ENCODE measurements at regions of chr2 and their contacts with region 1.

Region 1: DNA sequence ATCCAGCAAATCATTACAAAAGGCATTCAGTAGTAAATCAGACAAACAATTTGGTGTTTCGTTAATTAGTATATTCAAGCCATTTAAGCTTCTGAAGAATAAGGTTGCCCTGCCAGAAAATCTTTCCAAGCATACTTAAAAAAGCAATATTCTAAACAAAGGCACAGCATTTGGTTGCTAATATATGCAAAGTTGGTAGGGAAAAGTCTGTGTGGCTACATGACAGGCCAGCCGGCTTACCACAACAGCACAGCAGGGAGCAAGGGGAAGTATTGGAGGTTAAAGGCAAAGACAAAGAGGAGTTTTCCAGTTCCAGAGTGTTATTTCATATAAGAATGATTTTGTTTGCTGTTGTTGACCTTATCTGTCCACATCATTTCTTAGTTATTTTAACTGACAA is 282.3 kb downstream of the MBD5 start:
- DNase-seq: no peak
- ATAC-seq: no peak
- H3K4me3 ChIP-seq: no peak overlapping the region
- H3K4me3 Mint-ChIP-seq: no peak overlapping the region
- H3K27ac ChIP-seq: no peak overlapping the region
- H3K27ac Mint-ChIP-seq: no peak overlapping the region
- H3K4me1 ChIP-seq: no peaks in the 10 kb centered on the region
- H3K4me1 Mint-ChIP-seq: no peaks in the 10 kb centered on the region
- H3K27me3 ChIP-seq: no peaks in the 10 kb centered on the region
- H3K27me3 Mint-ChIP-seq: no peaks in the 10 kb centered on the region
- CTCF ChIP-seq: no peak

Region 2: GRCh38 chr2:148253685-148254084 is 49.5 kb before region 1 on chr2:
- CTCF ChIA-PET with region 1: no interaction called
- POLR2A ChIA-PET with region 1: no interaction called
- intact Hi-C with region 1: no loop called
- DNase-seq: peak in 1 of 9 experiments; percentile 24
- ATAC-seq: no peak
- H3K4me3 ChIP-seq: no peak overlapping the region
- H3K4me3 Mint-ChIP-seq: no peak overlapping the region
- H3K27ac ChIP-seq: no peak overlapping the region
- H3K27ac Mint-ChIP-seq: no peak overlapping the region
- H3K4me1 ChIP-seq: no peaks in the 10 kb centered on the region
- H3K4me1 Mint-ChIP-seq: no peaks in the 10 kb centered on the region
- H3K27me3 ChIP-seq: no peaks in the 10 kb centered on the region
- H3K27me3 Mint-ChIP-seq: no peaks in the 10 kb centered on the region
- CTCF ChIP-seq: no peak

Region 3: DNA sequence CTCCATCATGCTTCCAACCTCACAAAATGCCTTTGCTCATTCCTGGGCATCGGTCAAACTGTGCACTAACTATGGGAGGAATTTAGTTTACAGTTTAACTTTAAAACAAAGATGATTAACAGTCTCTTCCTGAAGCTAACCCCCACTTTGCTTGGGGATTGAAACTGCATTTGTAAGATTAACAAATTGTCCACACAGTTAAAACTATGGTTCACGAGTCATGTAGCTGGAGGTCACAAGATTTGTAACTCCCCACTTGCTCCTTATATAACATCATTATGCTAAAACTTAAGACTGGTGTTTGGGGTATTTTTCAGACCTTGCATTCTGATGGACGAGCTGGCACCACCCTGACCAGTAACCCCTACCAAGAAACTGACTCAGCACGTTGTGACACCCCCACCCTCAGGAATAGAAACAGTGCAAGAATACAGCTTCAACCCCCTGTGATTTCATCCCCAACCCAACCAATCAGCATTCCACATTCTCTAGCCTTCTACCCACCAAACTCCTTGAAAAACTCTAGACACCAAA is 29.9 kb before region 1 on chr2:
- CTCF ChIA-PET with region 1: no interaction called
- POLR2A ChIA-PET with region 1: no interaction called
- intact Hi-C with region 1: no loop called
- DNase-seq: no peak
- ATAC-seq: no peak
- H3K4me3 ChIP-seq: no peak overlapping the region
- H3K4me3 Mint-ChIP-seq: no peak overlapping the region
- H3K27ac ChIP-seq: no peak overlapping the region
- H3K27ac Mint-ChIP-seq: no peak overlapping the region
- H3K4me1 ChIP-seq: no peaks in the 10 kb centered on the region
- H3K4me1 Mint-ChIP-seq: no peaks in the 10 kb centered on the region
- H3K27me3 ChIP-seq: no peaks in the 10 kb centered on the region
- H3K27me3 Mint-ChIP-seq: no peaks in the 10 kb centered on the region
- CTCF ChIP-seq: no peak

Region 4: DNA sequence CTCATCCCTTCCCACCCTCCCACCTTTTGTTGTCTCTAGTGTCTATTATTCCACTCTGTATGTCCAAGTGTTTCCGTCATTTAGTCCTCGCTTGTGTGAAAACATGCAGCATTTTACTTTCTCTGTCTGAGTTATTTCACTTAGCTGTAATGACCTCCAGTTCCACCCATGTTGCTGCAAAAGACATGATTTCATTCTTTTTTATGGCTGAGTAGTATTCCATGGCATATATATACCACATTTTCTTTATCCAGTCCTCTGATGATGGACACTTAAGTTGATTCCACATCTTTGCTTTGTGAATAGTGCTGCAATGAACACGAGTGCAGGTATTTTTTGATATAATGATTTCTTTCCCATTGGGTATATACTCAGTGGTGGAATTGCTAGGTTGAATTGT is 14.4 kb after region 1 on chr2:
- CTCF ChIA-PET with region 1: no interaction called
- POLR2A ChIA-PET with region 1: no interaction called
- intact Hi-C with region 1: loop called in 1 of 2 experiments (anchors 1 kb)
- DNase-seq: no peak
- ATAC-seq: no peak
- H3K4me3 ChIP-seq: no peak overlapping the region
- H3K4me3 Mint-ChIP-seq: no peak overlapping the region
- H3K27ac ChIP-seq: no peak overlapping the region
- H3K27ac Mint-ChIP-seq: no peak overlapping the region
- H3K4me1 ChIP-seq: no peaks in the 10 kb centered on the region
- H3K4me1 Mint-ChIP-seq: no peaks in the 10 kb centered on the region
- H3K27me3 ChIP-seq: no peaks in the 10 kb centered on the region
- H3K27me3 Mint-ChIP-seq: no peaks in the 10 kb centered on the region
- CTCF ChIP-seq: no peak

Region 5: GRCh38 chr2:148770047-148770446 is 466.9 kb after region 1 on chr2:
- CTCF ChIA-PET with region 1: no interaction called
- POLR2A ChIA-PET with region 1: no interaction called
- intact Hi-C with region 1: loop called in 1 of 2 experiments (anchors 10 kb)
- DNase-seq: no peak
- ATAC-seq: no peak
- H3K4me3 ChIP-seq: no peak overlapping the region
- H3K4me3 Mint-ChIP-seq: no peak overlapping the region
- H3K27ac ChIP-seq: no peak overlapping the region
- H3K27ac Mint-ChIP-seq: no peak overlapping the region
- H3K4me1 ChIP-seq: no peaks in the 10 kb centered on the region
- H3K4me1 Mint-ChIP-seq: peaks cover 3% of the 10 kb centered on the region
- H3K27me3 ChIP-seq: no peaks in the 10 kb centered on the region
- H3K27me3 Mint-ChIP-seq: no peaks in the 10 kb centered on the region
- CTCF ChIP-seq: no peak